ENCODE measurements at regions of chr15 and their contacts with region 1.

Region 1: DNA sequence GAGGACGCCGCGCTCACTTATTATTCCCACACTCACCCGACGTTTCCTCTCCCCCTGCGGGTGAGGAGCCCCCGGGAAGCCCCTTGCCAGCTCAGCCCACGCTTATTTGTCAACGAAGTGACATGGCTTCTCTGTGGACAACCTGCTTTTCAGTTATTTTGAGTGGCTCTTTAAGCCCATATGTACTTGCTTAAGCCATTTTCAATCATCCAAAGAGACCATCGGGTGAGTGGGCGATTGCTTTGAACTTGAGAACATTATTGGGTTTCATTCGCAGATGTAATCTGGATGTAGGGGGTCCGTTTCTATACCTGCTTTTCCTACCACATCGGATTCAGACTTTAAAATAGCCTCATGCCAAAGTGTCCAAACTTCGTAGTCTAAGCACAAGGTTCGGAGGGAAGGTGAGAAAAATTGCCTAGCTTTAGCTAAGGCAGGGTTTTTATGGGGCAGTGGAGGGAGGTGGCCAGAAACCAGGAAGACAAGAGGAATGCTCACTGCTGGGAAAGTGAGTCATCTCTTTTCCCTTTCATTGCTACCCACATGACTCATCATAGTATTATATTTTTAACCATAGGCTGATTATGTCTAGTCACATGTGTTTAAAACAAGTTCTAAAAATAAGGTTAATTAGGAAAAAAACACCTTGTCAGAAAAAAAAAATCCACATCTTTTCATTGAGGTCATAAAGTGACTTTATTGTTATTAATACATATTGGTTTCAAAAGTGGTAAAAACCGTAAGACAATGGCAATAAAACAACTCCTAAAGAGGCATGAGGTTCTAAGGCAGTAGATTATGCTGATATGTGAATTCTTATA is 773.1 kb upstream of the NR2F2 start:
- DNase-seq: peak; percentile 92
- ATAC-seq: peak; percentile 71
- H3K4me3 ChIP-seq: peak overlapping the region; percentile 19; the same call in 1 of the 2 replicates
- H3K27ac ChIP-seq: peak overlapping the region; percentile 98
- H3K4me1 ChIP-seq: peaks cover 31% of the 10 kb centered on the region
- H3K27me3 ChIP-seq: no peaks in the 10 kb centered on the region
- CTCF ChIP-seq: no peak

Region 2: GRCh38 chr15:95259513-95259912 is 297.9 kb before region 1 on chr15:
- CTCF ChIA-PET with region 1: no interaction called
- POLR2A ChIA-PET with region 1: no interaction called
- intact Hi-C with region 1: loop called (anchors 5 kb)
- DNase-seq: peak; percentile 82
- ATAC-seq: peak; percentile 77
- H3K4me3 ChIP-seq: no peak overlapping the region
- H3K27ac ChIP-seq: no peak overlapping the region
- H3K4me1 ChIP-seq: peaks cover 5% of the 10 kb centered on the region; the same call in 1 of the 2 replicates
- H3K27me3 ChIP-seq: no peaks in the 10 kb centered on the region
- CTCF ChIP-seq: peak; percentile 81

Region 3: DNA sequence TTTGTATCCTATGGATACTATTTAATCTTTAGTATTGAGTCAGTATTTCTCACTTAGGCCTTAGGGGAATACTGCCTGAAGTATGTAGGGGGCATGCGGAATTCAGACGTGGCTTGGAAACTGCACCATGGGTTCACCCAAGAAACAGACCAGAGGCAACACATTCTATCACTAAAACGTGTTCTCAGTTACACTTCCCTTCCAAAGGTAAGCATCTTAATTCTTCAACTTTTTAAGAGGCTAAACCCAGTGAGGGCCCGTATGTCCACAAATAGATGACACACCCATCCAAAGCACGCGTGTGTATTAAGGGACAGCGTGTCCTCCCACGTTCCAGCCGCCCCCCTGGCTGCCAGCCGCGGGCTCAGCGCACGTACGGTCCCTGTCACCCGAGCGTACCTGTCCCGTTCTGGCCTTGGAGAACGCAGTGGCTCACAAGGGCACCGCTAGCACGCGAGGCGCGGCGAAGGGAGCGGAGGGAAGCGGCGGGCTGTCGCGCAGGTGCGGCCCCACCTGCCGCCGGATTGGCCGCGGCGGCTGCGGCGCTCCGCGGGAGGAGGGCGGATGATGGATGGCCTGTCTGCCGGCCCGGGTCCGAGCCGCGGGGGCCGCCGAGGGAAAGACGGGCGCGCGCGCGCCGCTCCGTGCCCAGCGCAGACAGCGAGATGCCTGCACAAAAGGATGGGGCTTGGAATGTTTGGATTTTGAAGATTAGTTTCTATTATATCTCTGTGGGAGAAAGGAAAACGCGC is 230.8 kb before region 1 on chr15:
- CTCF ChIA-PET with region 1: no interaction called
- POLR2A ChIA-PET with region 1: no interaction called
- intact Hi-C with region 1: loop called (anchors 10 kb)
- DNase-seq: no peak
- ATAC-seq: no peak
- H3K4me3 ChIP-seq: no peak overlapping the region
- H3K27ac ChIP-seq: no peak overlapping the region; the same call in 1 of the 2 replicates
- H3K4me1 ChIP-seq: peaks cover 30% of the 10 kb centered on the region
- H3K27me3 ChIP-seq: no peaks in the 10 kb centered on the region
- CTCF ChIP-seq: no peak

Region 4: GRCh38 chr15:95503640-95504227 is 53.7 kb before region 1 on chr15:
- CTCF ChIA-PET with region 1: no interaction called
- POLR2A ChIA-PET with region 1: no interaction called
- intact Hi-C with region 1: no loop called
- DNase-seq: no peak
- ATAC-seq: no peak
- H3K4me3 ChIP-seq: no peak overlapping the region
- H3K27ac ChIP-seq: no peak overlapping the region
- H3K4me1 ChIP-seq: no peaks in the 10 kb centered on the region
- H3K27me3 ChIP-seq: no peaks in the 10 kb centered on the region
- CTCF ChIP-seq: no peak

Region 5: GRCh38 chr15:95712785-95713184 is 155.3 kb after region 1 on chr15:
- CTCF ChIA-PET with region 1: no interaction called
- POLR2A ChIA-PET with region 1: no interaction called
- intact Hi-C with region 1: loop called (anchors 2 kb)
- DNase-seq: peak; percentile 86
- ATAC-seq: peak; percentile 93
- H3K4me3 ChIP-seq: no peak overlapping the region
- H3K27ac ChIP-seq: peak overlapping the region; percentile 95
- H3K4me1 ChIP-seq: peaks cover 22% of the 10 kb centered on the region
- H3K27me3 ChIP-seq: no peaks in the 10 kb centered on the region
- CTCF ChIP-seq: no peak

Region 6: GRCh38 chr15:96028620-96029019 is 471.2 kb after region 1 on chr15:
- CTCF ChIA-PET with region 1: no interaction called
- POLR2A ChIA-PET with region 1: no interaction called
- intact Hi-C with region 1: loop called (anchors 2 kb)
- DNase-seq: no peak
- ATAC-seq: no peak
- H3K4me3 ChIP-seq: no peak overlapping the region
- H3K27ac ChIP-seq: no peak overlapping the region
- H3K4me1 ChIP-seq: peaks cover 11% of the 10 kb centered on the region
- H3K27me3 ChIP-seq: no peaks in the 10 kb centered on the region
- CTCF ChIP-seq: 0 out of 2 replicates have a peak, but pooled peaks have one; percentile 18

Region 7: GRCh38 chr15:97248376-97248775 is 1690.9 kb after region 1 on chr15:
- CTCF ChIA-PET with region 1: no interaction called
- POLR2A ChIA-PET with region 1: no interaction called
- intact Hi-C with region 1: loop called (anchors 5 kb)
- DNase-seq: no peak
- ATAC-seq: no peak
- H3K4me3 ChIP-seq: no peak overlapping the region
- H3K27ac ChIP-seq: no peak overlapping the region
- H3K4me1 ChIP-seq: no peaks in the 10 kb centered on the region
- H3K27me3 ChIP-seq: peaks cover 32% of the 10 kb centered on the region
- CTCF ChIP-seq: no peak